ENCODE measurements at regions of chr19 and their contacts with region 1.

Region 1: GRCh38 chr19:1605236-1606137 is at the start of gene UQCR11:
- DNase-seq: peak; percentile 87 to 95 (median 91)
- H3K4me3 ChIP-seq: peak within 1 kb of the TSS; percentile 80 to 85
- H3K4me3 Mint-ChIP-seq: peak within 1 kb of the TSS; percentile 94 to 99 (median 96)
- H3K27ac ChIP-seq: peak within 1 kb of the TSS; percentile 94
- H3K27ac Mint-ChIP-seq: peak within 1 kb of the TSS; percentile 98 to 100 (median 99)
- H3K4me1 ChIP-seq: peaks cover 56% of the 10 kb centered on the region
- H3K4me1 Mint-ChIP-seq: peaks cover 20 to 70% (median 47%) of the 10 kb centered on the region in 4 donors
- H3K27me3 ChIP-seq: no peaks in the 10 kb centered on the region
- H3K27me3 Mint-ChIP-seq: no peaks in the 10 kb centered on the region
- total RNA-seq, gene UQCR11: 157 to 158 TPM

Region 2: DNA sequence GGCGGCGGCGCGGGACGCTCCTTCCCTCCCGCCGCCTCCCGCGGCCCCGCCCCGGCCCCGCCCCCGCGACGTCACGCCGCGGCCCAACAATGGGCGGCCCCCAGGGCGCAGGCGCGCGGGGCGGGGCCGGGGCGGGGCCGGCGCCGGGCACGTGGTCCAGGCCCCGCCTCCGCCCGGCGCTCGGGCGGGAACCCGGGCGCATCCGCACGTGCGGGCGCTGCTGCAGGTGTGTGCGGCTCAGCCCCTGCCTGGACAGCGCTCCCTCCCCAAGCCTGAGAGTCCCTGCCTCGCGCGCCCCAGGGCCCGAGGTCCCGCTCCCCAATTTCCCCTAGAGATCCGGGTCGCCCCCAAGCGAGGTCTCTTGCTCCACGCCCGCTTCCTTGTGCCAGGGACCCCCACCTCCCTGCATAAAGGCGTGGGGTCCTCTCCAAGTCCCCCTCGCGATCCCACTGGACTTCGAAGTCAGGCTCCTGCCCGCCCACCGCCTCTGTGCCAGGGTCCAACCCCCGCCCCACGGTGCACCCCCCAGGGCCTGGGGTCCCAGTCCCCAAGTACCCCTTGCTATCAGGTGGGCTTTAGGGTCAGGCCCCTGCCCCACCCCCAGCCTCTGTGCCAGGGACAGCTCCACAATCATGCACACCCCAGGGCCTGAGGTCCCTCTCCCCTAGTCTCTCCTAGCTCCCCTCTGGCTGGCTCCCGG is 37.0 kb before region 1 on chr19 and contains the start of gene MEX3D:
- CTCF ChIA-PET with region 1: no interaction called
- POLR2A ChIA-PET with region 1: interaction called, 4 read pairs
- intact Hi-C with region 1: loop called (anchors 1 kb)
- DNase-seq: peak; percentile 70 to 82 (median 80)
- H3K4me3 ChIP-seq: no peak within 1 kb of the TSS
- H3K4me3 Mint-ChIP-seq: peak within 1 kb of the TSS in 6 of 8 donors; percentile 26 to 76 (median 46)
- H3K27ac ChIP-seq: no peak within 1 kb of the TSS
- H3K27ac Mint-ChIP-seq: peak within 1 kb of the TSS in 3 of 7 donors; percentile 23 to 77 (median 25)
- H3K4me1 ChIP-seq: peaks cover 7% of the 10 kb centered on the region
- H3K4me1 Mint-ChIP-seq: peaks cover 2 to 11% (median 3%) of the 10 kb centered on the region in 4 donors
- H3K27me3 ChIP-seq: no peaks in the 10 kb centered on the region
- H3K27me3 Mint-ChIP-seq: peaks cover 2% of the 10 kb centered on the region in 2 donors
- total RNA-seq, gene MEX3D: 4.5 to 4.9 TPM

Region 3: GRCh38 chr19:1592755-1593500 is 12.6 kb before region 1 on chr19 and contains the start of gene MBD3:
- CTCF ChIA-PET with region 1: interaction called, 8 read pairs
- POLR2A ChIA-PET with region 1: interaction called, 86 read pairs
- intact Hi-C with region 1: loop called (anchors 1 kb)
- DNase-seq: peak; percentile 83 to 90 (median 88)
- H3K4me3 ChIP-seq: peak within 1 kb of the TSS; percentile 30 to 86
- H3K4me3 Mint-ChIP-seq: peak within 1 kb of the TSS; percentile 87 to 93 (median 89)
- H3K27ac ChIP-seq: peak within 1 kb of the TSS; percentile 88
- H3K27ac Mint-ChIP-seq: peak within 1 kb of the TSS; percentile 90 to 96 (median 92)
- H3K4me1 ChIP-seq: peaks cover 24% of the 10 kb centered on the region
- H3K4me1 Mint-ChIP-seq: peaks cover 9 to 26% (median 15%) of the 10 kb centered on the region in 4 donors
- H3K27me3 ChIP-seq: no peaks in the 10 kb centered on the region
- H3K27me3 Mint-ChIP-seq: no peaks in the 10 kb centered on the region
- total RNA-seq, gene MBD3: 56.9 to 62.8 TPM

Region 4: DNA sequence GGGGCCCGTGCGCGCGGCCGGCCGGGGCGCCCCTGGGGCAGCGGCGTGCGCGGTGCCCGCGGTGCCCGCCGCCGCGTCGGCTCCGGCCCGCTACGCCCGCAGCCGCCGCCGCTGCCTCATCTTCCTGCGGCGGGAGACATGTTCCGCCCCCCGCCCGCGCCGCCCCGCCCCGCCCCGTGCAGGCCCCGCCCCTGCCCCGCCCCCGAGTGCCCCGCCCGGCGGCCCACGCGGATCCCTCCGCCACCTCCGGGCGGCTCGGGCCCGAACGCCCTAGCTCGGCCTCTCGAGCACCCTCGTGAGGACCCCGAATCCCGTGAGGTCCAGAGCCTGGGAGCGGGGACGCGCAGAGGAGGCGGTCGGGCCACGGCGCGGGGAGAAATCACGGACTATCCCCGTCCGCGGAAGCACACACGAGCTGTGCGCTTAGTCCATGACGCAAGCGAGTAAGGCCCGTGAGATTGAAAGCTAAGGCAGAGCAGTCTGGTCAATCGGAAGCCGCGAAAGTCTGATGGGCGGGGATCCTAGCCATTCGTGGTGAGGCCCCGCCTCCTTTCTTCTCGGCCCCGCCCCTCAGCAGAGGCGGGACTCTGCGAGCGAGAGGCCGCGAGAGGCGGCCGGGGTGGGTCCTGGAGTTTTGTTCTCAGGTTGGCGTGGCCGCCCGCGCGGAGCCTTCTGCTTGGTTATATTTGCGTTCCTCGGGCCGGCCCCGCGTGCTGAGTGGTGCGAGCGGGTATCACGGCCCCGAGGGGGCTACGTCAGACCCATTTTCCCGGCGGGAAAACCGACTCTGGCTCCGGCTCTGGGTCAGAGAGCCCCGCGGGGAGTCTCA is 47.2 kb after region 1 on chr19 and contains the start of gene TCF3:
- CTCF ChIA-PET with region 1: interaction called, 14 read pairs
- POLR2A ChIA-PET with region 1: interaction called, 115 read pairs
- intact Hi-C with region 1: loop called (anchors 1 kb)
- DNase-seq: peak; percentile 98 to 100 (median 100)
- H3K4me3 ChIP-seq: peak within 1 kb of the TSS; percentile 36 to 84
- H3K4me3 Mint-ChIP-seq: peak within 1 kb of the TSS; percentile 84 to 95 (median 89)
- H3K27ac ChIP-seq: peak within 1 kb of the TSS; percentile 99
- H3K27ac Mint-ChIP-seq: peak within 1 kb of the TSS; percentile 94 to 99 (median 96)
- H3K4me1 ChIP-seq: peaks cover 17% of the 10 kb centered on the region
- H3K4me1 Mint-ChIP-seq: peaks cover 5 to 22% (median 13%) of the 10 kb centered on the region in 4 donors
- H3K27me3 ChIP-seq: no peaks in the 10 kb centered on the region
- H3K27me3 Mint-ChIP-seq: peaks cover 1 to 6% of the 10 kb centered on the region in 2 donors
- total RNA-seq, gene TCF3: 72.0 to 75.7 TPM

Region 5: DNA sequence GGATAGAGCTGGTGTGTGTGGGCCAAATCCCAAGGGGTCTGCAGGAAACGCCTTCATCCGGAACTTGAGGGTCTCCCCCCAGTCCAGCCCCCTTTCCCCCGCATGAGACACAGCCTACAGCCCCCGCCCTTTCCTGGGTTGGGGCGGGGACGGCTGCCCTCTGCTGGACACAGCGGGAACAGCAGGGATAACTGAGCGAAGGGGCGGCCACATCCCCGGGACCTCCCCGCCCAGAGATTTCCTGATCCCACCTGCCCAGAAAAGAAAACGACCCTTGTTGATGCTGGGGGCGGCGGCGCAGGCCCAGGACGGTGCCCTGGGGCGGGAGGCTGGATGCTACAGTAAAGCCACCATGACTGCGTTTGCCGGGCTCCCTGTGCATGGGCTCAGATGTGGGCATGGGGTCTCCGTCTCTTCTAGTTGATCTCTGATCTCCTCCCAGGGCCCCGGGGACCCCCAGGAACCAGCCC is 162.0 kb after region 1 on chr19:
- CTCF ChIA-PET with region 1: no interaction called
- POLR2A ChIA-PET with region 1: no interaction called
- intact Hi-C with region 1: loop called (anchors 1 kb)
- DNase-seq: peak; percentile 40 to 61 (median 47)
- H3K4me3 ChIP-seq: no peak overlapping the region
- H3K4me3 Mint-ChIP-seq: no peak overlapping the region
- H3K27ac ChIP-seq: no peak overlapping the region
- H3K27ac Mint-ChIP-seq: no peak overlapping the region
- H3K4me1 ChIP-seq: peaks cover 4% of the 10 kb centered on the region
- H3K4me1 Mint-ChIP-seq: peaks cover 0 to 2% (median 0%) of the 10 kb centered on the region in 4 donors
- H3K27me3 ChIP-seq: peaks cover 54% of the 10 kb centered on the region
- H3K27me3 Mint-ChIP-seq: peaks cover 41 to 51% of the 10 kb centered on the region in 2 donors